ENCODE measurements at regions of chr1 and their contacts with region 1.

Region 1: DNA sequence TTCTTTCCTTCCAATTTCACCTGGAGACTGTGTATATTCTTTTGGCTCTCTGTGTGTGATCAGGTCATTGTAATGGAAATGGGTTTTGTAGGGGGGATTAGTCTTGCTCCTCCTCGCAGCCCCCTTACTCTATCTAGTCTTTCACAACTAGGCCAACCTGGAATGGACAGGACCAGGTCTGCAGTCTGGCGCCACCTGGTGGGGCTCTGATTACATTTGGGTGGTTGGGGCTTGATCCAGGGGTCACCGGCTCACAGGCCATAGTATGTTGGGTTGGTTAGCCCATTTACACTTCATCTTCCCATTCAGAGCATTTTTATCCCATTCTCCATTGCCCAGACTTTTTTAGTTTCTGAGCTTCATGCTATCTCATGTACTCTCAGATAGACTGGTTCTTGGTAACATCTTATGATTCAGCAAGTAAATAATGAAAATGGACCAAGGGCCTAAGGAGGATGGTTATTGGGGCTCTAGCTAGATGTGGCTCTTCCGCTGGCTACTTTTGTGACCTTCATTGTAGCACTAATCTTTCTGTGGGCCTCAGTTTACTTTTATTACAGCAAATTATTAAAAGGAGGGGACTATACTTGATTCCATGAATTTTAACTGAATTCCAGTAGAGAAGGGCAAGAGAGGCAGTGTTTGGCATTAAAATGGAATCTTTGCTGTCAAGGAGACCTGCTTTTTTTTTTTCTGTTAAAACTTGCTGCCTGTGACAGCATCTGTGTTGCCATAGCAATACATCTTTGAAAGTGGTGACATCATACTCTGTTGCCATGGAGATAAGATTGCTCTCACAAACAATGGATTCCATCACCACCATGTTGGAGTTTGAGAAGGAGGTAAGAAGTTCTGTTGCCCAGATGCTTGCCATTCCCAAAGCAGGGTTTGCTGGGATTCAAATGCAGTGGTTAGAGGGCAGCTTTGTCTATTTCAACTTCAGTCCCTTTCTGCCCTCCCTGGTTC is 150.1 kb downstream of the PLXNA2 start:
- DNase-seq: peak; percentile 83
- H3K4me3 Mint-ChIP-seq: no peak overlapping the region
- H3K27ac Mint-ChIP-seq: peak overlapping the region; percentile 31
- H3K4me1 Mint-ChIP-seq: peaks cover 2% of the 10 kb centered on the region
- H3K27me3 Mint-ChIP-seq: no peaks in the 10 kb centered on the region
- CTCF ChIP-seq: peak; percentile 96

Region 2: GRCh38 chr1:208036109-208036808 is 57.8 kb before region 1 on chr1:
- CTCF ChIA-PET with region 1: interaction called, 26 read pairs
- POLR2A ChIA-PET with region 1: no interaction called
- intact Hi-C with region 1: loop called (anchors 5 kb)
- DNase-seq: peak; percentile 56
- H3K4me3 Mint-ChIP-seq: no peak overlapping the region
- H3K27ac Mint-ChIP-seq: peak overlapping the region; percentile 16
- H3K4me1 Mint-ChIP-seq: no peaks in the 10 kb centered on the region
- H3K27me3 Mint-ChIP-seq: no peaks in the 10 kb centered on the region
- CTCF ChIP-seq: peak; percentile 51

Region 3: GRCh38 chr1:208054485-208054884 is 39.6 kb before region 1 on chr1:
- CTCF ChIA-PET with region 1: interaction called, 27 read pairs
- POLR2A ChIA-PET with region 1: no interaction called
- intact Hi-C with region 1: no loop called
- DNase-seq: peak; percentile 55
- H3K4me3 Mint-ChIP-seq: no peak overlapping the region
- H3K27ac Mint-ChIP-seq: peak overlapping the region; percentile 10
- H3K4me1 Mint-ChIP-seq: no peaks in the 10 kb centered on the region
- H3K27me3 Mint-ChIP-seq: no peaks in the 10 kb centered on the region
- CTCF ChIP-seq: no peak

Region 4: GRCh38 chr1:208071435-208072031 is 22.5 kb before region 1 on chr1:
- CTCF ChIA-PET with region 1: interaction called, 23 read pairs
- POLR2A ChIA-PET with region 1: interaction called, 4 read pairs
- intact Hi-C with region 1: no loop called
- DNase-seq: no peak
- H3K4me3 Mint-ChIP-seq: no peak overlapping the region
- H3K27ac Mint-ChIP-seq: no peak overlapping the region
- H3K4me1 Mint-ChIP-seq: no peaks in the 10 kb centered on the region
- H3K27me3 Mint-ChIP-seq: no peaks in the 10 kb centered on the region
- CTCF ChIP-seq: no peak

Region 5: DNA sequence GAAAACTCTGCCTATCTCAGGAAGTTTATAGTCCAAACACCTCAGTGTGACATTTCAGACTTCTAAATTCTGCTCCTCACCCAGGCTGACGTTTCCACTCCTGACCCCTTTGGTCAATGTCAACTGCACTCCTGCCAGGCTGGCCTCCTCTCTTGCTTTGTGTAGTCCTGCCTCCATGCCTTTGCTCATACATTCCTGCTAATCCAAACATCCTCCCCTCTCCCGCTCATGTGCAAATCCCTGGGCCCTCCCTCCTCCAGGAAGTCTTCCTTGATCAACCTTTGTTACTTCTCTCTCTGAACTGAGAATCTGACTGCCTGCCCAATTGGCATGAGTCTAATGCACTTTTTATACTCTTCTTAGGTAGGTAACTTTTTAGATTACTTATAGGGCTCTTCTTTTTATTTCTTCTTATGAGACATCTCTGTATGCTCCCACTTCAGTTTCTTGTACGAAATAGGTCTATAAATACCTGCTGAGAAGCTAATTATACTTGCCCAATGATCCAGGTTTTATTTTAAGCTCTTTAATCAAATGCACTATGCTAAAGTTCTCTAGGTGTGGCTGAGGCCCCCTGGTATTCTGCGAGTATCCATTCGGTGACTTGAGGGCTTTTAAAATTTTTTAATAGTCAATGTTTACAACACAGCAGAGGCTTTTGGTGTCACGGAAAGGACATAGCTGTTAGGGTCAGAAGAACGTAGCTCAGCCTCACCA is 22.0 kb after region 1 on chr1:
- CTCF ChIA-PET with region 1: interaction called, 27 read pairs
- POLR2A ChIA-PET with region 1: interaction called, 3 read pairs
- intact Hi-C with region 1: no loop called
- DNase-seq: no peak
- H3K4me3 Mint-ChIP-seq: no peak overlapping the region
- H3K27ac Mint-ChIP-seq: no peak overlapping the region
- H3K4me1 Mint-ChIP-seq: no peaks in the 10 kb centered on the region
- H3K27me3 Mint-ChIP-seq: no peaks in the 10 kb centered on the region
- CTCF ChIP-seq: no peak